HEK293 (cell line): ENCODE measurements at regions of chrX and their contacts with region 1.

Region 1: GRCh38 chrX:119981286-119982070 is 37.9 kb upstream of the NKAP start:
- H3K4me3 ChIP-seq: no peak overlapping the region
- H3K27ac ChIP-seq: no peak overlapping the region
- H3K4me1 ChIP-seq: peaks cover 9% of the 10 kb centered on the region; the same call in 1 of the 2 replicates
- CTCF ChIP-seq: peak; percentile 70

Region 2: GRCh38 chrX:119948381-119948780 is 33.1 kb before region 1 on chrX:
- CTCF ChIA-PET with region 1: interaction called, 13 read pairs
- POLR2A ChIA-PET with region 1: no interaction called
- H3K4me3 ChIP-seq: no peak overlapping the region
- H3K27ac ChIP-seq: no peak overlapping the region
- H3K4me1 ChIP-seq: no peaks in the 10 kb centered on the region
- CTCF ChIP-seq: no peak

Region 3: GRCh38 chrX:120000490-120001246 is 19.2 kb after region 1 on chrX:
- CTCF ChIA-PET with region 1: interaction called, 10 read pairs
- POLR2A ChIA-PET with region 1: no interaction called
- H3K4me3 ChIP-seq: no peak overlapping the region
- H3K27ac ChIP-seq: no peak overlapping the region
- H3K4me1 ChIP-seq: no peaks in the 10 kb centered on the region
- CTCF ChIP-seq: no peak

Region 4: GRCh38 chrX:120036704-120037103 is 55.2 kb after region 1 on chrX:
- CTCF ChIA-PET with region 1: interaction called, 20 read pairs
- POLR2A ChIA-PET with region 1: no interaction called
- H3K4me3 ChIP-seq: no peak overlapping the region
- H3K27ac ChIP-seq: no peak overlapping the region
- H3K4me1 ChIP-seq: no peaks in the 10 kb centered on the region
- CTCF ChIP-seq: no peak